Psoas muscle (tissue), 8 donors: ENCODE measurements at regions of chr21 and their contacts with region 1.

Region 1: DNA sequence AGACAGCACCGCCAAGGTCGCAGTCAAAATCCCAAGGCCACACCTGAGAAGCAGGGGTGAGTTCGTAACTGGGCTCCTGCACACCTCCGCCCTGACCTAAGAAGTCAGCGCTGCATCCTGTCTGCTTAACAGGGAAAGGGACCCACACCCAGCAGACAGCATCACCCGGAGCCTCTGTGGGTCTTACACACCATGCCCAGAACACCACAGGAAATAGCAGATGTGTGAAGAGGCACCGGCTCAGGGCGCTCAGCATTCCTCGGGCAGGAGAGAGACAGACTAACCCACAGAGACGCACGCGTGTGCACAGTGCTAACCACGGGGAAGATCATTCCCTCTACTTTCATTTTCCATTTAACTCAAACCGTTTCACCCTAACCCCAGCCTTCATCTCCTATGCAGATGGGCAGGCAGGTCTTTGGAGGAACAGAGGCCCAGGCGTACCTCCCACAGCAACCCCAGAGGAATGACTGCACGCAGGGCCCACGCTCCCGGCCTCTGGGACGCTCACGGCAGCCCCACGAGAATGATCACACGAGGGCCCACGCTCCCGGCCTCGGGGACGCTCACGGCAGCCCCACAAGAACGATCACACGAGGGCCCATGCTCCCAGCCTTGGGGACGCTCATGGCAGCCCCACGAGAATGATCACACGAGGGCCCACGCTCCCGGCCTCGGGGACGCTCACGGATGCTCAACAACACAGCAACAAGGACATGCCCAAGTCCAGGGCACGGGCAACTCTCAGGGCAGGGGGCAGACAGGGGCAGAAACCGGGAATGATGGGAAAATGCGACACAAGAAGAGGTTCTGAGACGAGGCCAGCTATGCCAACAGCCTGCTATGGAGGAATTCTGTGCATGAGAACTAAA is 20.9 kb downstream of the POFUT2 start:
- DNase-seq: no peak
- ATAC-seq: no peak
- H3K4me3 ChIP-seq: no peak overlapping the region
- H3K27ac ChIP-seq: no peak overlapping the region
- H3K4me1 ChIP-seq: no peaks in the 10 kb centered on the region
- H3K27me3 ChIP-seq: no peaks in the 10 kb centered on the region
- CTCF ChIP-seq: no peak

Region 2: GRCh38 chr21:44039828-44040227 is 1226.9 kb before region 1 on chr21:
- intact Hi-C with region 1: loop called in 1 of 2 experiments (anchors 5 kb)
- DNase-seq: no peak
- ATAC-seq: no peak
- H3K4me3 ChIP-seq: no peak overlapping the region
- H3K27ac ChIP-seq: no peak overlapping the region
- H3K4me1 ChIP-seq: peaks cover 6% of the 10 kb centered on the region
- H3K27me3 ChIP-seq: no peaks in the 10 kb centered on the region
- CTCF ChIP-seq: no peak

Region 3: DNA sequence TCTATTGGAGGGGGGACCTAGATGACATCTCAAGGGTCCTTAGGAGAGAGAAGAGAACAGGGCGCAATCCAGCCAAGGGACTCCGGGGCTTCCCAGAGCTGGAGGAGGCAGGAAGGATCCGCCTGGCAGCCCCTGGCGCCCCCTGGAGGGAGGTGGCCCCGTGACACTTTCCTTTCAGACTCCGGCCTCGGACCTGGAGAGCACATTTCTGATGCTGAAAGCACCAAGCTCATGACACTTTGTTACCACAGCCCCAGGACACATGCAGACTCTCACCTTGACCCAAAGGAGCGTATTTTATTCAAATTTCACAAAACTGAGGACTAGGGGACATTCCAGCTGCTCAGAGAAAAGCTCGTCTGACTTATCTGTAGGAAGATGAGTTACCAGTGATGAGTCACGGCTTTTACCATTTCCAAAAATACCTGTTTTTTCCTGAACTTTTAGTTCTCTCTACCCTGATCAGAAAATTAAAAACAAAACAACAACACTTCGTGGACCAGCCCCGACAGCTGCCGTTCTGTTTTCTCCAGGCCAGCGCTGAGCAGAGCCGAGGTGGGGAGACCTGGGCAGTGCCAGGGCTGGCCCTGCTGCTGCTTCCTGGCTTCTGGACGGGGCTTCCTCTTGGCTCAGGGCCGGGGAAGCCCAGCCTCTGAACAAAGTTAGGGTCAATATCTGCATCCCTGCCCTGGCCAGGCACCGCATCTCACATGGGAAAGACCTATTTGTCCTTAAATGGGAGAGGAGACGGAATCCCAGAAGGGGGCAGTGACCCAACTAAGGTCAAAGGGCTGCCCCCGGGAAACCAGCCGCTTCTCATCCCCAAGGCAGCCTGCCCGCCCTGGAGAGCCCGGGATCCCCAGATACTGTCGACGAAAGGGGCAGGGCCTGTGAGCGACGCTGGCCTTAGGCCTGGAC is 42.6 kb after region 1 on chr21:
- intact Hi-C with region 1: no loop called
- DNase-seq: peak; percentile 75 to 78
- ATAC-seq: peak; percentile 49 to 72 (median 58)
- H3K4me3 ChIP-seq: no peak overlapping the region
- H3K27ac ChIP-seq: peak overlapping the region; percentile 38
- H3K4me1 ChIP-seq: peaks cover 27% of the 10 kb centered on the region
- H3K27me3 ChIP-seq: peaks cover 0 to 57% (median 5%) of the 10 kb centered on the region in 3 donors
- CTCF ChIP-seq: peak; percentile 57